CD14-positive monocyte (primary cell): ENCODE measurements at regions of chr22 and their contacts with region 1.

Region 1: GRCh38 chr22:40898850-40899357 is 37.0 kb upstream of the DNAJB7 start:
- DNase-seq: peak; percentile 24 to 55 (median 51)
- H3K4me3 ChIP-seq: peak overlapping the region in 1 of 3 experiments; percentile 21
- H3K4me3 Mint-ChIP-seq: peak overlapping the region in 1 of 2 donors; percentile 60
- H3K27ac ChIP-seq: no peak overlapping the region
- H3K27ac Mint-ChIP-seq: no peak overlapping the region
- H3K4me1 ChIP-seq: no peaks in the 10 kb centered on the region
- H3K4me1 Mint-ChIP-seq: peaks cover 5% of the 10 kb centered on the region
- H3K27me3 ChIP-seq: no peaks in the 10 kb centered on the region
- H3K27me3 Mint-ChIP-seq: peaks cover 0 to 2% (median 0%) of the 10 kb centered on the region in 3 donors
- CTCF ChIP-seq: peak; percentile 60

Region 2: GRCh38 chr22:40651563-40652501 is 247.1 kb before region 1 on chr22:
- intact Hi-C with region 1: loop called in 1 of 2 experiments (anchors 10 kb)
- DNase-seq: peak; percentile 89 to 95 (median 91)
- H3K4me3 ChIP-seq: peak overlapping the region; percentile 38 to 67 (median 51)
- H3K4me3 Mint-ChIP-seq: peak overlapping the region; percentile 70 to 85
- H3K27ac ChIP-seq: peak overlapping the region; percentile 68 to 85
- H3K27ac Mint-ChIP-seq: peak overlapping the region; percentile 82 to 95 (median 94)
- H3K4me1 ChIP-seq: peaks cover 6 to 16% of the 10 kb centered on the region in 2 donors
- H3K4me1 Mint-ChIP-seq: peaks cover 7% of the 10 kb centered on the region
- H3K27me3 ChIP-seq: no peaks in the 10 kb centered on the region
- H3K27me3 Mint-ChIP-seq: peaks cover 0 to 14% (median 3%) of the 10 kb centered on the region in 3 donors
- CTCF ChIP-seq: no peak